ENCODE measurements at regions of chr17 and their contacts with region 1.

Region 1: DNA sequence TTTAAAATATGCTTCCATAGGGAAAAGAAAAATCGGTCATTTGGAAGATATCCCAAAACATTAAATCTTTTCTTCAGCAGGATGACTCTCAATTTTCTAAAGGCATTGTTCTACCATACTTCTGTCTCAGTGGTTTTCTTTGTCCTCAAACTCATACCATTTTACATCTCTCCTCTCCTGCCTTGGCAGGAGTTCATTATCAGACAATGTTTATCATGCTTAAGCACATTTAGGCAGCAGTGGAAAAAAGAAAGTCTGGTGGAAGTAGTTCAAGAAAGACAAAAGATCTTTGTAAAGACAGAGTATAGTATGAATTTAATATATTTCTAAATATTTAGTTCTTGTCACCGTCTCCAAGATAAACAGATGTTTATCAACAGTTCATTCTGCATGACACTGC is 68.2 kb downstream of the CDK12 start:
- DNase-seq: no peak
- ATAC-seq: no peak
- H3K4me3 Mint-ChIP-seq: no peak overlapping the region
- H3K27ac Mint-ChIP-seq: no peak overlapping the region
- H3K4me1 Mint-ChIP-seq: peaks cover 5% of the 10 kb centered on the region
- H3K27me3 Mint-ChIP-seq: no peaks in the 10 kb centered on the region
- CTCF ChIP-seq: no peak

Region 2: DNA sequence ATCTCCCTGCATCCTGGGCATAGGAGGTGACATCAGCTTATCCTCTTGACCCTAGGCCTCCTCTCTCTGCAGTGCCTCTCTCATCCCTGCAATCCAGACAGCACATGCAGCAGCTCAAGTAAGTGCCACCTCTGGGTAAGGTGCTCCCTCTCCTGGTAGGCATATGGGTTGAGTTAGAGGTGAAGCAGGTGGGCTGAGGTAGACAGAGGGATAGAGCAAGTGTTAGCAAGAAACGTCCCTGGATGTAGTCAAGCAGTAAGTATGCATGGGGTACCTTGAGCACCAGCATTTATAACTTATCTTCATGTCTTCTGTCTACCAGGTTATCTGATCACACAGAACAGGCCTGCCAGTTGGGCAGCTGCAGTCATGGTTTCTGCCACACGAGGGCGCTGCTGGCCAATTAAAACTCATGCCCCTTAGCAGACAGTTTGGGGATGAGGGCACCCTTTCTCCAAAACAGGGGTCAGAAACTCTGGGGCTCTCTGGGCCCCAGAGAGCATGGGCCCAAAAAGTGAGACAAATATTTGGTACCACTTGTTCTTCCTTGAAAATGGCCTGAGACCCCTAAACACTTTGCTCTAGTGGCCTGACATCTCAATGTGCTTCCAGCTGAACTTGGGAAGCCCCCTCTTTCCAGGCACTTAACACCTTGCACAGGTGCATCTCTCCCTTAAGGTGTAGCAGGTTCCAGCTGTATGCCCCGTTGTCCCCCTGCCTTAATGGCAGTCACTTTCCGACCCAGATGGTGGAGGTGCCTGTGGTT is 18.4 kb after region 1 on chr17:
- CTCF ChIA-PET with region 1: interaction called, 42 read pairs
- POLR2A ChIA-PET with region 1: no interaction called
- intact Hi-C with region 1: no loop called
- DNase-seq: peak; percentile 87
- ATAC-seq: peak; percentile 87
- H3K4me3 Mint-ChIP-seq: no peak overlapping the region
- H3K27ac Mint-ChIP-seq: no peak overlapping the region
- H3K4me1 Mint-ChIP-seq: no peaks in the 10 kb centered on the region
- H3K27me3 Mint-ChIP-seq: no peaks in the 10 kb centered on the region
- CTCF ChIP-seq: peak; percentile 98

Region 3: DNA sequence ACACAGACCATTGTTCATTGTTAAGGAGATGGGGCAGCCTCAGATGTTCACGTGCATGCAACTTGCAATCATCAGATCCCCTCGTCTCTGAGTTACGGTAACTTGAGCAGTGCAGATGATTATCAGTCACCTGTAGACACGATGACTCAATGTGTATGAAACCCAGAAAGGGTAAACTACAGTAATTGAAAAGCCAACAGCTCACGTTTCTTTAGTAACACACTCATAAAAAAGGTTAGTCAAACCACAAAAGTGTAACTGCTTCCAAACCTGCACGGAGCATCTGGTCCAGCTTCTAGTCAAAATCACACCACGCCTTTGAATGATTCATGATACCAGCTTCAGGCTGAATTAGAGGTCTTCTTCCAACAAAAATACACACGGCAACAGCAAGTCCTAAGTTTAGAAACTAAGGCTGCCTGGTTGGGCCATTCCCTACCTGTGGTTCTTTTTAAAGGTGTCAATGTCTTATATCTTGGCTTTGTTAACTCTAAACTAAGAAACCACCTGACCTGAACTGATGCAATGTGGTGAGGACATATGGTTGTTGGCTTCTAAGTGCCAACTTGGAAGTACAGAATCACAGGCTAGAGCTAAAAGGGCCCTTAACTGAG is 240.6 kb after region 1 on chr17:
- CTCF ChIA-PET with region 1: no interaction called
- POLR2A ChIA-PET with region 1: no interaction called
- intact Hi-C with region 1: no loop called
- DNase-seq: peak; percentile 84
- ATAC-seq: peak; percentile 81
- H3K4me3 Mint-ChIP-seq: peak overlapping the region; percentile 18
- H3K27ac Mint-ChIP-seq: peak overlapping the region; percentile 90
- H3K4me1 Mint-ChIP-seq: peaks cover 95% of the 10 kb centered on the region
- H3K27me3 Mint-ChIP-seq: no peaks in the 10 kb centered on the region
- CTCF ChIP-seq: no peak

Measured in activated CD8-positive, alpha-beta T cell treated with anti-CD3 and anti-CD28 coated beads for 36 hours (primary cell).